Heart right ventricle (tissue), 16 donors: ENCODE measurements at regions of chr1 and their contacts with region 1.

Region 1: DNA sequence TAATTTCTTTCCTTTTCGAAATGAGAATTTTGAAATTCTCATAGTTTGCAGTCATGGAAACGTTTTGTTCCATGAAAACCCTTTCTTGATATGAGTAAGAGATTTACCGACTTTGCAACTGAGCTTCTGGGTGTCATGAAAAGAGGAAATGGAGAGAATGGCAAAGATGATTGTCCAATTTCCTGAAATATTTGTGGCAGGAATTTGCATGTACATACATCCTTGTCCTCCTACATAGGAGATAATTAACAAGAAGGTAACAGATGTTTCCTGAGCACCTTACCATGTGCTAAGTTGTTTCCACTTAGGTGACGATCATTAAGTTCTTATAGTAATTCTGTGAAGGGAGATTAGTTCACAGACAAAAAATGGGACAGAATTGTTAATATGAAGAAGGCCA is 170.7 kb downstream of the NEGR1 start:
- DNase-seq: no peak
- ATAC-seq: no peak
- H3K4me3 ChIP-seq: no peak overlapping the region
- H3K27ac ChIP-seq: no peak overlapping the region
- H3K4me1 ChIP-seq: peaks cover 0 to 7% (median 0%) of the 10 kb centered on the region in 9 donors
- H3K27me3 ChIP-seq: no peaks in the 10 kb centered on the region
- CTCF ChIP-seq: no peak

Region 2: DNA sequence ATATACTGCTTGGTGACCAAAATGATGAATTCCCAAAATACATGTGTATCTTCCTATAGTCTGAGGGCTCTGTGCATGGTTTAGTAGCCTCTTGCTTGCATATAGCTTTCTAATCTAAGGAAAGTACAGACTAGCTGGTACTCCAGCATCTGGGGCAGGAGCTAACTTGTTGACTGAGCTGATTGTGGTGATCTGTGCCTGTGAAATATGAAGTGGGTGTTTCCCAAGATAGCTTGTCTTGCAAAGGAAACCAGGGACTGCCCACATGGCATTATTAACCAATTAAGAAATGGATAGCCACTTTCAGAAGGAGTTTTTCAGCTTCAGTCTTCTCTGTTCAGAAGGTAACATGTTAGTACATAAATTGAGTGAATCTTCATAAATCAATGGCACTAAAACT is 49.1 kb before region 1 on chr1:
- intact Hi-C with region 1: loop called in 1 of 10 experiments (anchors 10 kb)
- DNase-seq: no peak
- ATAC-seq: no peak
- H3K4me3 ChIP-seq: no peak overlapping the region
- H3K27ac ChIP-seq: no peak overlapping the region
- H3K4me1 ChIP-seq: peaks cover 0 to 10% (median 0%) of the 10 kb centered on the region in 9 donors
- H3K27me3 ChIP-seq: no peaks in the 10 kb centered on the region
- CTCF ChIP-seq: no peak

Region 3: GRCh38 chr1:72075425-72075824 is 36.2 kb before region 1 on chr1:
- intact Hi-C with region 1: no loop called
- DNase-seq: no peak
- ATAC-seq: no peak
- H3K4me3 ChIP-seq: no peak overlapping the region
- H3K27ac ChIP-seq: no peak overlapping the region
- H3K4me1 ChIP-seq: no peaks in the 10 kb centered on the region
- H3K27me3 ChIP-seq: no peaks in the 10 kb centered on the region
- CTCF ChIP-seq: no peak

Region 4: GRCh38 chr1:72097851-72098570 is 13.7 kb before region 1 on chr1:
- intact Hi-C with region 1: loop called in 1 of 10 experiments (anchors 1 kb)
- DNase-seq: no peak
- ATAC-seq: no peak
- H3K4me3 ChIP-seq: no peak overlapping the region
- H3K27ac ChIP-seq: no peak overlapping the region
- H3K4me1 ChIP-seq: no peaks in the 10 kb centered on the region
- H3K27me3 ChIP-seq: no peaks in the 10 kb centered on the region
- CTCF ChIP-seq: no peak

Region 5: GRCh38 chr1:72498371-72498770 is 386.7 kb after region 1 on chr1:
- intact Hi-C with region 1: no loop called
- DNase-seq: no peak
- ATAC-seq: no peak
- H3K4me3 ChIP-seq: no peak overlapping the region
- H3K27ac ChIP-seq: no peak overlapping the region
- H3K4me1 ChIP-seq: no peaks in the 10 kb centered on the region
- H3K27me3 ChIP-seq: no peaks in the 10 kb centered on the region
- CTCF ChIP-seq: no peak